ENCODE measurements at regions of chr15 and their contacts with region 1.

Region 1: GRCh38 chr15:75367913-75368688 is at the start of gene MAN2C1:
- DNase-seq: peak; percentile 95
- CTCF ChIP-seq: peak; percentile 82

Region 2: DNA sequence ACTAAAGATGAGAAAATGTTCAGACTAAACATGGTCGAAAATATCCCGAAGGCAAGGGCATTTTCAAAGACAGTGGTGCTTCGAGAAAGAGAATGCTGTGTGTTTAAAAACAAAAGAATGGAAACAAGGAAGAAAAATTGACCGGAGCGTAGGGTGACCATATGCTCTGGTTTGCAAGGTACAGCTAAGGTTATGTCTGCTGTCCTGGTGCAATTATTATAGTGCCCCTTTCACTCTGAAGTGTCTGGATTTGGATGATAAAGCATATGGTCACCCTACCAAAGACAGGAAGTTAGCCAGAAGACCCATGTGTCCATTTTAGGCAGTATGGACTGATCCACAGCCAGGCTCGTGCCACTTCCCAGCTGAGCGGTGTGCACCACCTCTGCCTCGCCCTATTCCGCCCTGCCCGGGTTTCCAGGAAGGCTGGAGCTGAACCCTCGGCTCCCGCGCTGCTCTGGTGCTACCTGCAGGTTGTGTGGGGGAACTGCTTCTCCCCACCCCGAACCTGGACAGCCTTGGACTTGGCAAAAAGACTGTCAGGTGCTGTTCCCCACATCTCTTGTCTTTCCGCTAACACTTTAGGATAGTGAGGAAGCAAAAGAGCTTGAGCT is 60.2 kb before region 1 on chr15:
- in situ Hi-C with region 1: no loop called
- DNase-seq: peak; percentile 38
- CTCF ChIP-seq: peak; percentile 43

Region 3: DNA sequence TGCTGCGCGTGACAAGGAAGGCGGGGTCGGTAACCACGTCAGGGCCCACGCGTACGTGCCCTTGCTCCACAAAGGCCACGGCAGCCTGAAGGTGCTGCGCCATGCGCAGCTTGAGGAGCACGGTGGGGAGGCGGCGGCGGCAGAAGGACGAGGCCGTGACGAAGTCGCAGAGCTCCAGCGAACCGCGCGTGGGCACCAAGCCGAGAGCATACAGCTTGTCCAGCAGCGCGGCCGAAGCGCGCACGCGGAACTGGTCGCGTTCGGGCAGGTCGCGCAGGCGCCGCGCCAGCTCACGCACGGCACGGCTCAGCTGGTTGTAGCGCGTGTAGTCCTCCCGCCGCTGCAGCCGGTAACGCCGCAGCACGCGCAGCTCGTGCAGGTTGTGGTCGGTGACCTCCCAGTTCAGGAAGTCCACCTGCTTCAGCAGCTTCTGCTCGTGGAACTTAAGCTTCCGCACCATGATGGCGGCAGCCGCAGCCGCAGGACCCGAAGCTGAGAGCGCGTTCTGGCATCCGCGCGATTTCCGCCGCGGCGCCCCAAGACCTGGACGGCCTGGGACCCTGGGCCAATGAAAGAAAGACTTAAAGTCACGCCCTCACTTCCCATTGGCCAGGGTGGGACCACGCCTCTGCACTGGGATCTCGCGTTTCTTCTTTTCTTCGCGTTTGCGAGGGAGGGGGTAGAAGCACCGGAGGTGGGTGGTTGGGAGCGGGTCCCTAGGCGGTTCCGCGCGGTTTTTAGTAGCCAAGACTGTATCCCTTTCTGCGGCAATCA is 271.8 kb after region 1 on chr15 and contains the start of gene IMP3:
- in situ Hi-C with region 1: loop called (anchors 25 kb)
- DNase-seq: peak; percentile 98
- CTCF ChIP-seq: no peak